T-cell (primary cell): ENCODE measurements at regions of chr1 and their contacts with region 1.

Region 1: GRCh38 chr1:9809100-9809510 is 14.7 kb downstream of the CLSTN1 start:
- DNase-seq: no peak
- ATAC-seq: no peak
- H3K4me3 ChIP-seq: no peak overlapping the region
- H3K4me3 Mint-ChIP-seq: no peak overlapping the region
- H3K27ac ChIP-seq: no peak overlapping the region
- H3K27ac Mint-ChIP-seq: peak overlapping the region; percentile 16 to 31
- H3K4me1 ChIP-seq: peaks cover 0 to 28% of the 10 kb centered on the region in 2 experiments
- H3K4me1 Mint-ChIP-seq: peaks cover 55 to 68% (median 65%) of the 10 kb centered on the region in 3 donors
- H3K27me3 ChIP-seq: no peaks in the 10 kb centered on the region
- H3K27me3 Mint-ChIP-seq: no peaks in the 10 kb centered on the region

Region 2: GRCh38 chr1:9413148-9413876 is 395.8 kb before region 1 on chr1:
- CTCF ChIA-PET with region 1: no interaction called
- POLR2A ChIA-PET with region 1: no interaction called
- DNase-seq: peak in 22 of 35 experiments; percentile 8 to 58 (median 28)
- ATAC-seq: peak; percentile 57 to 72 (median 62)
- H3K4me3 ChIP-seq: peak overlapping the region in 1 of 2 donors; percentile 2
- H3K4me3 Mint-ChIP-seq: peak overlapping the region in 2 of 3 donors; percentile 9 to 54
- H3K27ac ChIP-seq: no peak overlapping the region
- H3K27ac Mint-ChIP-seq: peak overlapping the region in 1 of 2 donors; percentile 49
- H3K4me1 ChIP-seq: peaks cover 38 to 57% of the 10 kb centered on the region in 2 experiments
- H3K4me1 Mint-ChIP-seq: peaks cover 47 to 56% (median 55%) of the 10 kb centered on the region in 3 donors
- H3K27me3 ChIP-seq: peaks cover 0 to 21% of the 10 kb centered on the region in 2 experiments
- H3K27me3 Mint-ChIP-seq: peaks cover 0 to 3% of the 10 kb centered on the region in 2 donors

Region 3: DNA sequence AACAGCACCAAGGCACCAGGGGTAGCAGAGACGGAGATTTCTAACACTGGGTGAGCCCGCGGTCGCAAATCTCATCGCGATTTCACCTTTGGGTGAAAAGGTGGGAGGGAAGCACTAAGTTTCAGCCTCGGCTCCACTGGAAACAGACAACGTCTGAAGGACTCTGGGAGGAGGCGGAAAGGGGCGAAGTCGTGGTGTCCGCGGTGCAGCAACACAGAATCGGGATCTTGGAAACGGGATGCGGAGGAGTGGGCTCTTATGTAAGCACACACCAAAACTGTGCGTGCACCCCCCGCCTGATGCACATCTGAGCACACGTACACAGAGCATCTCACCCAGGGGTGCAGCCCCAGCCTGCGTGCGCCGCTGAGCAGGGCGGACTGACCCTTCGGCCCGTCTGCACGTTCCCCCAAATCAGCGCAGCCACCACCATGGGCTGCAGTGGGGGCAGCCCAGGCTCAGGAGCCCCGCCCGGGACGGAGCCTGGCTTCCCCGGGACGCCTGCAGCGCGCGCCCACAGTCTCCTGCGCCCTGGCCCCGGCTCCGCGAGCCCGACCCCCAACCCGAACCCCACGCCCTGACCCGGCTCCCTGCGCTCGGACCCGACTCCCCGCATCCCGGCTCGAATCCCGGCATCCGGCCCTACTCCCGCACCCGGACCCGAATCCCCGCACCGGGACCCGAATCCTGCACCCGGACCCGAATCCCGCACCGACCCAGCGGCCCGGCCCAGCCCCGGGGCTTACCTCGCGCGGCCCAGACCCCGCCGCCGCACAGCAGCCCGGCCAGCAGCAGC is 14.0 kb after region 1 on chr1:
- CTCF ChIA-PET with region 1: no interaction called
- POLR2A ChIA-PET with region 1: interaction called in 1 of 2 experiments, 10 read pairs
- DNase-seq: peak in 14 of 35 experiments; percentile 9 to 46 (median 18)
- ATAC-seq: peak; percentile 4 to 27 (median 10)
- H3K4me3 ChIP-seq: peak overlapping the region; percentile 85 to 90
- H3K4me3 Mint-ChIP-seq: peak overlapping the region; percentile 92 to 97 (median 93)
- H3K27ac ChIP-seq: no peak overlapping the region
- H3K27ac Mint-ChIP-seq: peak overlapping the region; percentile 86 to 89
- H3K4me1 ChIP-seq: peaks cover 17 to 37% of the 10 kb centered on the region in 2 experiments
- H3K4me1 Mint-ChIP-seq: peaks cover 37 to 63% (median 48%) of the 10 kb centered on the region in 3 donors
- H3K27me3 ChIP-seq: no peaks in the 10 kb centered on the region
- H3K27me3 Mint-ChIP-seq: no peaks in the 10 kb centered on the region

Region 4: DNA sequence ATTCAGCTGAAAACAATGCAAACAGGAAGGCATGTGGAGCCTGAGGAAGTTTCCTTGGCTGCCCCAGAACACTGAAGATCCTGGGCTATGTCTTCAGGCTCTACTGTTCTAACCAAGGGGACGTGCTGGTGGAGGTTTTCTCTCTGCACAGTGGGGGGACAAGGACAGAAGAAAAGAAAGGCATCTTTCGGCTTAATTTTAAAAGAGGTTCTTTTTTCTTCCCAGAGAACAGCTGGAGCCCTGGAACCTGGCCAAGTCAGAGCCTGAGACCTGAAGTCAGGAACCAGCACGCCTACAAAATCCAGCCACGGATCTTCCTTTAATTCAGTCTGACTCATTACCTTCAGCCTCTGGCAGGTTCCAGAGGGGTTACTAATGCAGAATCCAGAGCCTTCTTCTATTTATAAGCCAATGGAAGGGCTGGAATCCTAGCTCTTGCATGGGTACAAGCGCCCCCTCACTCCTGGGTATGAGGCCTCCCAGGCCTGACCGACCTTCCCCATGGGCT is 81.2 kb after region 1 on chr1:
- CTCF ChIA-PET with region 1: no interaction called
- POLR2A ChIA-PET with region 1: no interaction called
- DNase-seq: no peak
- ATAC-seq: no peak
- H3K4me3 ChIP-seq: no peak overlapping the region
- H3K4me3 Mint-ChIP-seq: no peak overlapping the region
- H3K27ac ChIP-seq: no peak overlapping the region
- H3K27ac Mint-ChIP-seq: no peak overlapping the region
- H3K4me1 ChIP-seq: no peaks in the 10 kb centered on the region
- H3K4me1 Mint-ChIP-seq: peaks cover 3 to 17% (median 13%) of the 10 kb centered on the region in 3 donors
- H3K27me3 ChIP-seq: no peaks in the 10 kb centered on the region
- H3K27me3 Mint-ChIP-seq: no peaks in the 10 kb centered on the region